ENCODE measurements at regions of chr1 and their contacts with region 1.

Region 1: GRCh38 chr1:225772323-225772768 is 5.3 kb upstream of the SRP9 start:
- H3K4me3 ChIP-seq: no peak overlapping the region
- H3K27ac ChIP-seq: no peak overlapping the region
- H3K4me1 ChIP-seq: peaks cover 11% of the 10 kb centered on the region
- CTCF ChIP-seq: peak; percentile 97

Region 2: DNA sequence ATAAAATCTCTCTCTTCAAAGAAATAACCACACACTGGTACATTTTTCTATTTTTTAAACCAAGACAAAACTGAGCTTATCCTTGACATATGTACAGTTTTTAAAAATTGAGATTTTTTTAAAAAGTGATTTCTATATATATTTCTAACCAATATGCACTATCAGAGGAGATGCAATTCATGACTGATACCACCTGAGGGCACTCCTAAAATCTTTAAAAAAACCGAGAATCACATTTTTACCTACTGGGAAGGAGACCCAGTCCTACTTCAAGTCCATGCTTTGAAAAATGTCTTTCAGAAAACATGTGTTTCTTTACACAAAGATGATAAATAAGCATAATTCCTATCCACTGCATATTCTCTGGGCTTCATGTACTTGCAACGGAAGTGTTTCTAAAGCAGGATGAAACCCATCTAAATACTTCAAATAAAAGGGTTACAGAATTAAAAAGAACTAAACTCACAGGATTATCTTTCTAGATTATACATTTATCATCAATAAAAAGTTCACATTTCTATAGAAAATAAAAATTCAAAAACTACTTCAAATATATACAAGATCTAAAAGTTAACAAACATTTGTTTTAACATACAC is 218.0 kb before region 1 on chr1:
- CTCF ChIA-PET with region 1: interaction called, 35 read pairs
- POLR2A ChIA-PET with region 1: interaction called, 4 read pairs
- H3K4me3 ChIP-seq: no peak overlapping the region
- H3K27ac ChIP-seq: no peak overlapping the region
- H3K4me1 ChIP-seq: no peaks in the 10 kb centered on the region
- CTCF ChIP-seq: 0 out of 2 replicates have a peak, but pooled peaks have one; percentile 33

Region 3: GRCh38 chr1:225652729-225653462 is 119.5 kb before region 1 on chr1 and contains the start of gene ENAH:
- CTCF ChIA-PET with region 1: interaction called, 27 read pairs
- POLR2A ChIA-PET with region 1: interaction called, 41 read pairs
- H3K4me3 ChIP-seq: peak within 1 kb of the TSS; percentile 92
- H3K27ac ChIP-seq: peak within 1 kb of the TSS; percentile 100
- H3K4me1 ChIP-seq: peaks cover 59% of the 10 kb centered on the region
- CTCF ChIP-seq: peak; percentile 74

Region 4: DNA sequence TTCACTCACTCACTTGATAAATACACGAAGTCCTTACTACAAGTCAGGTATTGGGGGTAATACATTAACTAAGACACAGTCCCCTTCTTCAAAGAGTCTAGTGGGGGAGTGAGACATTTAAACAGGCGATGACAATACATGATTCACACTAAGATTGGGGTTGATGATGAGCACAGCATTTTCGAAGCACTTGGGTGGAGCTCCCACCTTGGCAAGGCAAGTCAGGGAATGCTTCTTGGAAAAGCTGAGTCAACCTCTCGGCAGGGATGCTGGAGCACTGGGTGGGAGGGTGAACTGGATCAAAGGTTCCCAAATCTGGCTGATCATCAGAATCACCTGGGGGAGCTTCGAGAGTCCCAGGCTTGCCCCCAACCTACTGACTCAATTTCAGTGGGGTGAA is 61.5 kb before region 1 on chr1:
- CTCF ChIA-PET with region 1: interaction called, 26 read pairs
- POLR2A ChIA-PET with region 1: no interaction called
- H3K4me3 ChIP-seq: no peak overlapping the region
- H3K27ac ChIP-seq: no peak overlapping the region
- H3K4me1 ChIP-seq: no peaks in the 10 kb centered on the region
- CTCF ChIP-seq: no peak

Region 5: DNA sequence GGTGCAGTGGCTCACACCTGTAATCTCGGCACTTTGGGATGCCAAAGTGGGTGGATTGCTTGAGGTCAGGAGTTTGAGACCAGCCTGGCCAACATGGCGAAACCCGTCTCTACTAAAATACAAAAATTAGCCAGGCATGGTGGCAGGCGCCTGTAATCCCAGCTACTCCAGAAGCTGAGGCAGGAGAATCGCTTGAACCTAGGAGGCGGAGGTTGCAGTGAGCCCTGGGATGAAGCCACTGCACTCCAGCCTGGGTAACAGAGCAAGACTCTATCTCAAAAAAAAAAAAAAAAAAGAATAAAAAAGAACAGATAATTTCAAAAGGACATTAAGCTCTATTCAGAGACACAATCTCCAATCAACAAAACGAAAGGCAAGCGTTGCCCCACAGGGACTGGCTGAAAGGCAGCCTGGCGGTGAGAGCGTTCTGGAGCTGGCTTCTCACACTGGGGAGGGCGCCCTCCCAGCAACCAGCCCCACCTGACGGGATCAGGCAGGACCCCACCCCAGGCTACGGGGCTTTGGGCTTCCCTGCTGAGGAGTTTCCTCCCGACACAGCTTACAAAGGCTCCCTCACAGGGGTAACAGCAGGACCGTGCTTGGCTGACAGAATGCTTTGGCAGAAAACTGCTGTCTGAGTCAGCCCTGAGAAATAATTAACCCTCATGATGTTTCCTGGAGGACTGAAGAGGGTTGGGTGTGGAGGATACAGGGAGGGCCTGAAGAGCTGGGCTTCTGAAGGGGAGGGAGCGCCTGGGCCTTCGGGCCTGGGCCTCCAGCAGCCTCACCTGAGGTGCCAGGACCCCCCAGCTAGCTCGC is 25.8 kb before region 1 on chr1:
- CTCF ChIA-PET with region 1: interaction called, 13 read pairs
- POLR2A ChIA-PET with region 1: interaction called, 16 read pairs
- H3K4me3 ChIP-seq: peak overlapping the region; percentile 3
- H3K27ac ChIP-seq: peak overlapping the region; percentile 35
- H3K4me1 ChIP-seq: no peaks in the 10 kb centered on the region
- CTCF ChIP-seq: peak; percentile 51; the same call in 1 of the 2 replicates

Measured in HEK293 (cell line).